ENCODE measurements at regions of chr1 and their contacts with region 1.

Region 1: DNA sequence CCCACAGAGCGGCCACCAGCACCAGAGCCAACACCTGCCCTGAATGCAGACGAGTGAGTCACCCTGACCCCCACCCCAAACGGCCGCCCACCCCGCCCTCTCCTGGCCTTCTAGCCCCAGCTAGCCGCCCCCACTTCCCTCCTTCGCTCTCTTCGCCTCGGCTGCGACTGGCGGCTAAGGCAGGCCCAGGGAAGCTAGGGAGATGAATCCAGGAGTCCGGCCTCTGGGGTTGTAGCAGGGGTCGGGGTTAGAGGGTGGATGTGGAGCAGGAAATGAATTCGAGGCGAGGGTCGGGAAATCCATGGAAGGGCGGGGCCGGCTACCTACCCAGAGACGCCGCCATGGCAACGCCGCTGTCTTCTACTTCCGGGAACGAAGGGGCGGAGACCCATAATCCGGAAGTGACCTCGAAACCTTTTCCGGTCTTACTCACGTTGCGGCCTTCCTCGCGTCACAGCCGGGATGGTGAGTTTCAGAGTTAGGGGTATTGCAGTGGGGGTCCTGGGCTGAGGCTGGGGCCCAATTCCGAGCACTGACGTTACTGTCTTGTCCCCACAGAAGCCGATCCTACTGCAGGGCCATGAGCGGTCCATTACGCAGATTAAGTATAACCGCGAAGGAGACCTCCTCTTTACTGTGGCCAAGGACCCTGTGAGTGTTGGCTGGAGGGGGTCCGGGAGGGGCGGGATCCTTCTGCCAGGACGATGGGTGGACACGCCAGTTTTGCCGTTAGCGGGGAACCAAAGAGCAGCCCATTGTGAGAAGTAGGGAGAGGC is at the starts of genes EIF3I and TMEM234:
- DNase-seq: peak; percentile 96
- H3K4me3 Mint-ChIP-seq: peak within 1 kb of the TSS; percentile 95
- H3K27ac Mint-ChIP-seq: peak within 1 kb of the TSS; percentile 97
- H3K4me1 Mint-ChIP-seq: peaks cover 35% of the 10 kb centered on the region
- H3K27me3 Mint-ChIP-seq: no peaks in the 10 kb centered on the region
- total RNA-seq, gene EIF3I: 382 to 391 TPM
- total RNA-seq, gene TMEM234: 5.1 to 6.4 TPM

Region 2: GRCh38 chr1:32179443-32180185 is 42.6 kb before region 1 on chr1 and contains the start of gene TXLNA:
- CTCF ChIA-PET with region 1: no interaction called
- intact Hi-C with region 1: loop called (anchors 1 kb)
- DNase-seq: peak; percentile 94
- H3K4me3 Mint-ChIP-seq: peak within 1 kb of the TSS; percentile 86
- H3K27ac Mint-ChIP-seq: peak within 1 kb of the TSS; percentile 96
- H3K4me1 Mint-ChIP-seq: peaks cover 47% of the 10 kb centered on the region
- H3K27me3 Mint-ChIP-seq: no peaks in the 10 kb centered on the region
- total RNA-seq, gene TXLNA: 84.3 to 86.2 TPM

Region 3: DNA sequence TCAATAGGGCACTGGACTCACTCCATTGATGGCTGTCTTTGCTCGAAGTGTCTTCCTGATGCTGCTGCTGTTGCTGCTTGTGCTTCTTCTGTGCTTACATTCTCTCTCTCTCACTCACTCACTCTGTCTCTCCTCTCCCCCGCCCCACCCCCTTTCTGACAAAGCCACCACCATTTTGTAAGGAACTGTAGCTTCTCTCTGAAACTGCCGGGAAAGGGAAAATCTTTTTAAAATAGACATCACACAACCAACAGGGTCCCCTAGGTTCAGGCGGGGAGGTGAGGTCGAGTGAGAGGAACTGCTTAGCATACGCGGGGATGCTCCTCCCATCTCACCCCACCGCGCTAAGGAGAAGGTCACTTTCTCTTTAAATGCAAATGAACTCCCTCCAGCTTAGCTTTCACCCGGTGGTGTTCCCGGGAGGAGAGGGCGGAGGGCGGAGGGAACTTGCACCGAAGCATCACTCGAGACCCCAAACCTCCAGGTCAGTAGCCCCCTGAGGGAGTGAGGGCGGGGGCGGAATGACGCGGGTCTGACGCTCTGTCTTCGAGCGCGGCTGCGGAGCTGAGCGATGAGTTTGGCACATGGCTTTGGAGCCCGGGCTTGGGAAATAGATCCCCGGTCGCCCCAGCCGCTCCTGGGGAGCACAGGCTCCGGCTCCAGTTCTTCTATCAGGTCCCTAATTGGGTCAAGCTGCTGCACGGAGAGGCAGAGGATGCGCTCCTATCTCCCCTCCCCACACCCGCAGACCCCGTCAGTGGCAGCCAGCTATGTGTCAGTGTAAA is 21.8 kb before region 1 on chr1 and contains the start of gene CCDC28B:
- CTCF ChIA-PET with region 1: interaction called, 5 read pairs
- intact Hi-C with region 1: loop called (anchors 2 kb)
- DNase-seq: peak; percentile 72
- H3K4me3 Mint-ChIP-seq: peak within 1 kb of the TSS; percentile 70
- H3K27ac Mint-ChIP-seq: peak within 1 kb of the TSS; percentile 88
- H3K4me1 Mint-ChIP-seq: peaks cover 38% of the 10 kb centered on the region
- H3K27me3 Mint-ChIP-seq: no peaks in the 10 kb centered on the region
- total RNA-seq, gene CCDC28B: 13.1 to 14.8 TPM

Region 4: DNA sequence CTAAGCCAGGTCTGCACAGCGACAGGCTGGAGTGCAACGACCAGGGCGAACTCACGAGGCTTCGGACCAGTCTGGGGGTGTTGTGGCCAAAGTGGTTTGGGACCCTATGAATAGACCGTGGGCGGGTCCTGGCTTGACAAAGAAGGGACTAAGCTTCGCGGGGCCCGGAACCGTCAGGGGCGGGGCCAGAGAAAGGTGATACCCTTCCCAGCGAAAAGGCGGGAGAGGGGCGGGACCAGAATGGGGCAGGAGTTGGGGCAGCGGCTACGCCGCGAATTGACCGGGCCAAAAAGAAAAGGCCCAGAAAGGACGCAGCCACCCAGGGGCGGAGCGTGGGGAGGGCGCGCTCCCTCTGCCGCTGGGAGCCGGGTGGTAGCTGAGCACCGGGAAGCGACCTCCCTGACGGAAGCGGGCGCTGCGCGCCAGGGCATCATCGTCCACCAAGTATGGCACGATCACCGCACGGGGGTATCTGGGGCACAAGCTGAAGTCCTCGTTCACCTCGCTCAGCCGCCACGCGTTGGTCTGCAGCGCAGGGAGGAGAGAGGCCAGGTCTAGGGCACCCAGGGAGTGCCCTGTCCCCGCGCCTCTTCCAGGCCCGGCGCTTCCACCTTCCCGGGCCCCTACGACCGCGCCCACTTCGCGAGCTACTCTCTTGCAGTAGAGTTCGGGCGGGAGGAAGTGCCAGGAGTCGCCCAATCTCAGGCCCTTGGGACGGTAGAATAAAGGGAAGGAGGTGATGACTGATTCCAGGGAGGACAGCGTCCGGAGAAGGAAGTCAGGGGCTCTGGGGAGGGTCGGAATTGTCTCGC is 18.2 kb after region 1 on chr1:
- CTCF ChIA-PET with region 1: interaction called, 13 read pairs
- intact Hi-C with region 1: loop called (anchors 1 kb)
- DNase-seq: peak; percentile 72
- H3K4me3 Mint-ChIP-seq: peak overlapping the region; percentile 82
- H3K27ac Mint-ChIP-seq: peak overlapping the region; percentile 50
- H3K4me1 Mint-ChIP-seq: peaks cover 23% of the 10 kb centered on the region
- H3K27me3 Mint-ChIP-seq: no peaks in the 10 kb centered on the region

Region 5: GRCh38 chr1:32291708-32292492 is 69.7 kb after region 1 on chr1 and contains the start of gene HDAC1:
- CTCF ChIA-PET with region 1: no interaction called
- intact Hi-C with region 1: loop called (anchors 2 kb)
- DNase-seq: peak; percentile 97
- H3K4me3 Mint-ChIP-seq: peak within 1 kb of the TSS; percentile 100
- H3K27ac Mint-ChIP-seq: peak within 1 kb of the TSS; percentile 98
- H3K4me1 Mint-ChIP-seq: peaks cover 48% of the 10 kb centered on the region
- H3K27me3 Mint-ChIP-seq: no peaks in the 10 kb centered on the region
- total RNA-seq, gene HDAC1: 111 to 120 TPM

Region 6: GRCh38 chr1:32351399-32352238 is 129.5 kb after region 1 on chr1:
- CTCF ChIA-PET with region 1: no interaction called
- intact Hi-C with region 1: loop called (anchors 5 kb)
- DNase-seq: peak; percentile 95
- H3K4me3 Mint-ChIP-seq: peak overlapping the region; percentile 83
- H3K27ac Mint-ChIP-seq: peak overlapping the region; percentile 76
- H3K4me1 Mint-ChIP-seq: peaks cover 31% of the 10 kb centered on the region
- H3K27me3 Mint-ChIP-seq: no peaks in the 10 kb centered on the region

Measured in activated naive CD4-positive, alpha-beta T cell treated with anti-CD3 and anti-CD28 coated beads for 36 hours (primary cell).